Activated CD8-positive, alpha-beta T cell treated with anti-CD3 and anti-CD28 coated beads for 36 hours (primary cell): ENCODE measurements at regions of chr20 and their contacts with region 1.

Region 1: DNA sequence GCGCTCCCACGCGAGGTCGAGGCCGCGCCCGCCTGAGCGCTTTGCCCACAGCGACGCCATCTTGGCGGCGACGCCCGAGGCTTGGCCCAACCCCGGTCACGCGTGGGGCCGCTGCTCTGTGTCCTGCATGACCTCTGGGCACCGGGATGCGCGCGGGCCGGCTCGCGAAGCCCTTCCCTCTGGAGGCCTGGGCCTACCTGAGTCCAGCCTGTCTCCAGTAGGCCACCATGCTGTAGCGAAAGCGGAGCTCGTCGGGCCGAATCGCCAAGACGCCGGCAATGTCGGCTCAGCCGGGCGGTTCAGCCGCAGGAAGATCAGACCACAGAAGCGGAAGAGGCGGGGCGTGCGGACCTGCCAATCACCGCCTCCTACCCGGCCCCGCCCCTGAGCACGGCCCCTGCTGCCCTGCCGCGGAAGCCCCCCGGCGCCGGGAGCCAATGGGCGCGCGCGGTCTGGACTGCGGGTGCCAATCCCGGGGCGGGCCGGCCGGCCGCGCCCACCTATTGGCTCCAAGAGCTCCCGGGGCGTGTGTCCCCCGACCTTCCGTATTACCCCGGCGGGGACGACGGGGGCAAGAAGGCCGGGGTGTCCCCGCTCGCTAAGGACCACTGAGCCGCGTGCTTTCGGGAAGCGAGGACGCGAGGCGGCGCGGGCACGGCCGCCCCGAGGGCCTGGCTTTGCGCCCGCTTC is at the start of gene ATP5F1E:
- DNase-seq: peak; percentile 97
- ATAC-seq: peak; percentile 99
- H3K4me3 Mint-ChIP-seq: peak within 1 kb of the TSS; percentile 78
- H3K27ac Mint-ChIP-seq: peak within 1 kb of the TSS; percentile 96
- H3K4me1 Mint-ChIP-seq: peaks cover 72% of the 10 kb centered on the region
- H3K27me3 Mint-ChIP-seq: no peaks in the 10 kb centered on the region
- CTCF ChIP-seq: no peak
- total RNA-seq, gene ATP5F1E: 67.4 to 68.8 TPM

Region 2: DNA sequence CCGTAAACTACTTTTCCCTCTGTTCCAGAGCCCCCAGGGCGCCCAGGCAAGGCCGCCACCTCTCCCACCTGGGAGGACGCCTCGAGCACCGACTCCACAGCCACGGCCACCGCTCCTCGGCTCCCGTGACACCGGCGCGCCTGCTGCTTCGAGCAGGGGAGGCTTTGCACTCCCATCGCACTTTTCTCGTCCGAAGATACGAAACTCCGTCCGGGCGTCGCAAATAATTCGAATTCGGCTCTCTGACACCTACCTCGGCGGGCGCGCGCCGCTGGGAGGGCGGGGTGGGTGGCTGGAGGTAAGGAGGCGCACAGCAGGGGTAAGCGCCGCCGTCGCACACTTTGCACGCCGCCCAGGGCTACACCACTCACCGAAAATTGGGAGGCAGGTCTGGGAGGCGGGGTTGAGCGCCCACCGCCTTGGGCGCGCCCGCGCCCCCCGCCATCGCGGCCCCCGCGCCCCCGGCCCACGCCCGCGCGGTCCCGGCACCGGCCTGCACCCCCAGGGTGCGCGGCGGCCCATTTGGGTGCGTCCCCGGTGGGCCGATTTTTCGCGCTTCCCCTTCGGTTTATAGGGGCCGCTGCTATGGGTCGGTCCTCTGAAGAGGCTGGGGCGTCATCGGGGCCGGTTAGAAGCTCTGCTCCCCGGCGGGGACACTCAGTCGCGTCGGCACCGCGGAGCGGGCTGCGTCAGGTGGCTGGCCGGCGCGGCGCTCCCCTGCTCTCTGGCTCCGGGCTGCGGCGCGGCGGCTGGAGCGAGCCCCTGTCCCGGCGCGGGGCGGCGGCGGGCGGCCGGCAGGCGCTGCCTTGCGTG is 143.4 kb before region 1 on chr20:
- CTCF ChIA-PET with region 1: interaction called, 3 read pairs
- POLR2A ChIA-PET with region 1: interaction called, 14 read pairs
- intact Hi-C with region 1: loop called (anchors 5 kb)
- DNase-seq: peak; percentile 89
- ATAC-seq: peak; percentile 51
- H3K4me3 Mint-ChIP-seq: peak overlapping the region; percentile 77
- H3K27ac Mint-ChIP-seq: peak overlapping the region; percentile 81
- H3K4me1 Mint-ChIP-seq: peaks cover 22% of the 10 kb centered on the region
- H3K27me3 Mint-ChIP-seq: no peaks in the 10 kb centered on the region
- CTCF ChIP-seq: no peak

Region 3: GRCh38 chr20:59020938-59021551 is 11.1 kb before region 1 on chr20:
- CTCF ChIA-PET with region 1: interaction called, 4 read pairs
- POLR2A ChIA-PET with region 1: interaction called, 18 read pairs
- intact Hi-C with region 1: no loop called
- DNase-seq: no peak
- ATAC-seq: no peak
- H3K4me3 Mint-ChIP-seq: no peak overlapping the region
- H3K27ac Mint-ChIP-seq: no peak overlapping the region
- H3K4me1 Mint-ChIP-seq: peaks cover 26% of the 10 kb centered on the region
- H3K27me3 Mint-ChIP-seq: no peaks in the 10 kb centered on the region
- CTCF ChIP-seq: no peak

Region 4: DNA sequence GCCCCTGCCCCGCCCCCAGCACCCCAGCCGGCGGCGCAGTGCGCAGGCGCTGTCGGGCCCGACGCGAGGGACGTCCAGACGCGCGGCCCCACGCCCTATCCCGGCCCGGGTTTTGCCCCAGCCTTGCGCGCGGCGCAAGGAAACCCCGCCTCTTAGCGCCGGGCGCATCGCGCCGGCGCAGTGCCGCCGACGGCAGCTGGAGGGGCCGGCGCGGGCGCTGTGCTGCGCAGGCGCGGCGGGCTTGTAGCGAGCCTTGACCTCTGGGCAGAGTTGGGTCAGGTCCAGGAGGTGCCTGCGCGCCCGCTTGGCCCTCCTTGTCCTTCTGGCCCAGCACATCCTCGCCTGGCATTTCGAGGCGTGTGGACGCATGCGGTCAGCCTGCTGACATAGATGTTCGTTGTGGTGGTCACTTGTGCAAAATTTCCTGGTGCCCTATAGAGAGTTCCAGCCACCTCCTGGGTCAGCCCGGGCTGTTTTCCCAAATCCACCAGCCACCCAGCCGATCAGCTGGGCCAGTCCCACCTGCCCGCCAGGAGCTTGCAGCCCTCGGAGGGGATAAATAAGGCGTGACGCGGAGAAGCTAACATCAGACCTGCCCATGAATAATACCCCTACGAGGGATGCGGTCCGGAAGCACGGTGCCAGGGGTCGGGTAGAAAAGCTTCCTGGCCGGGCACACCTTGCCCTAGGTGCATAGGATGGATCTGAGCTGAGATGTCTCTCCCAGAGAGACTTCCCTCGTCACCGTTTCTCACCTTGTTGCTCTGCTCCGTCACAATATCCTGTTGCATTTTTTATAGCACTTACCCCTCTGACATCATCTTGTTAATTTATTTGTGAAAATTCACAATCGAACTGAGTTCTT is 10.9 kb after region 1 on chr20:
- CTCF ChIA-PET with region 1: interaction called, 3 read pairs
- POLR2A ChIA-PET with region 1: interaction called, 40 read pairs
- intact Hi-C with region 1: no loop called
- DNase-seq: peak; percentile 93
- ATAC-seq: peak; percentile 97
- H3K4me3 Mint-ChIP-seq: peak overlapping the region; percentile 92
- H3K27ac Mint-ChIP-seq: peak overlapping the region; percentile 94
- H3K4me1 Mint-ChIP-seq: peaks cover 47% of the 10 kb centered on the region
- H3K27me3 Mint-ChIP-seq: no peaks in the 10 kb centered on the region
- CTCF ChIP-seq: no peak